Dendritic cell treated with granulocyte-macrophage colony-stimulating factor and Interleukin-4, amounts not matched to agents 40 ng/mL and 50 ng/mL, for 4 days (primary cell): ENCODE measurements at regions of chr21 and their contacts with region 1.

Region 1: GRCh38 chr21:26461500-26461899 is 111.6 kb downstream of the CYYR1 start:
- H3K4me3 Mint-ChIP-seq: no peak overlapping the region
- H3K27ac Mint-ChIP-seq: no peak overlapping the region
- H3K4me1 Mint-ChIP-seq: peaks cover 6% of the 10 kb centered on the region
- H3K27me3 Mint-ChIP-seq: no peaks in the 10 kb centered on the region

Region 2: DNA sequence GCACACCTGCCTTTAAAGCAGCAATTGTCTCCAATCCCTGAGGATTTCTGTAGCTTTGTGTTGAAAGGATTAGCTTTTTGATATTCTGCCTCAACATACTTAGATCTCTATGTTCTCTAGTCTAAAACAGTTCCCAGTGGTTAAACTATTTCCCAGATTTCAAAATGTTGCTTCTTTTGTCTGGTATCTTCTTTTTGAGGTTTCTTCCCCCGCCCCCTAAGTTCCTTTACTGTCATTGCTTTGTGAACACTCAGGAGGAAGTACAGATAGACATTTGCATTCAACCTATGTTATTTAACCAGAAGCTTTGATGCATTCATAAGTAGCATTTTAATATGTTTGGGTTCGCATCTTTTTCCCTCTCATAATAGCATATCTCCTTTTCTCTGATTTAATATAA is 78.1 kb after region 1 on chr21:
- intact Hi-C with region 1: loop called (anchors 2 kb)
- H3K4me3 Mint-ChIP-seq: no peak overlapping the region
- H3K27ac Mint-ChIP-seq: no peak overlapping the region
- H3K4me1 Mint-ChIP-seq: peaks cover 7% of the 10 kb centered on the region
- H3K27me3 Mint-ChIP-seq: no peaks in the 10 kb centered on the region